ENCODE measurements at regions of chr10 and their contacts with region 1.

Region 1: DNA sequence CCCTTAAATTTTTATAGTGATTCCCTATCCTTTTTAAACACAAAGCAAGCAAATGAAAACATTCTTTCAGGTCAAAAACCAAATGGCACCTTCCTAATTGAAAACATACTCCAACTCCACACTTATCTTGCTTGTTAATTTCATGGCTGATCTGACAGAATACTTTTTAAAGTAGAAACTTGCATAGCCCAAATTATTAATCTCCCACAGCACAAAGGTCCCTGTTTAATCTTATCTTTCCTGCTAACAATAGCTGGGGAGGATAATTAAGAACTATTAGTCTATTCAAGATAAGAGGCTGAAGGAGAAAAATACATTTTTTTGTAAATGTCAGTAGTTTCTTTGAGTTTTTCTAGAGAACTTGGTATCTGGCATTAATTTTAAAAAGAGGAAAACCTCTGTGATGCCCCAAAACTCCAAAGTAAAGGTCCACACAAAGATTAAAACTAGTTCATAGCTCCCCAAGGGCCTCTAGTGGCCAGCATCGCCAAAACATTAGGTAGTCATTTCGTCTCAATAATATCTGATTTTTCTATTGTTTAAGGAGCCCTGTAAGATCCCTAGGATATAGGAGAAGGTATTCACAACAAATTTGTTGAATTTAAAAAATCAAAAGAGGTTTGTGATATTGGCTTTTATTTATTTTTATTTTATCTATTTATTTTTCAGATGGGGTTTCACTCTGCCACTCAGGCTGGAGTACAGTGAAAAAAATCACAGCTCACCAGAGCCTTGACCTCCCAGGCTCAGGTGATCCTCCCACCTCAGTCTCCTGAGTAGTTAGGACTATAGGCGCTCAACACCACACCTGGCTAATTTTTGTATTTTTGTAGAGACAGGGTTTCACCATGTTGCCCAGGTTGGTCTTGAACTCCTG is 14.7 kb downstream of the CDNF start:
- DNase-seq: peak; percentile 80
- H3K4me3 ChIP-seq: no peak overlapping the region
- H3K27ac ChIP-seq: no peak overlapping the region
- H3K4me1 ChIP-seq: peaks cover 28% of the 10 kb centered on the region
- CTCF ChIP-seq: peak; percentile 99

Region 2: GRCh38 chr10:14499601-14499904 is 323.6 kb before region 1 on chr10:
- CTCF ChIA-PET with region 1: no interaction called
- POLR2A ChIA-PET with region 1: interaction called, 6 read pairs
- intact Hi-C with region 1: loop called (anchors 1 kb)
- DNase-seq: no peak
- H3K4me3 ChIP-seq: no peak overlapping the region
- H3K27ac ChIP-seq: no peak overlapping the region
- H3K4me1 ChIP-seq: peaks cover 23% of the 10 kb centered on the region
- CTCF ChIP-seq: no peak

Region 3: GRCh38 chr10:14536241-14537213 is 286.6 kb before region 1 on chr10:
- CTCF ChIA-PET with region 1: interaction called, 3 read pairs
- POLR2A ChIA-PET with region 1: interaction called, 3 read pairs
- intact Hi-C with region 1: loop called (anchors 2 kb)
- DNase-seq: peak; percentile 59
- H3K4me3 ChIP-seq: no peak overlapping the region
- H3K27ac ChIP-seq: no peak overlapping the region
- H3K4me1 ChIP-seq: no peaks in the 10 kb centered on the region
- CTCF ChIP-seq: peak; percentile 94

Region 4: GRCh38 chr10:14617852-14618251 is 205.3 kb before region 1 on chr10:
- CTCF ChIA-PET with region 1: no interaction called
- POLR2A ChIA-PET with region 1: interaction called, 11 read pairs
- intact Hi-C with region 1: no loop called
- DNase-seq: no peak
- H3K4me3 ChIP-seq: no peak overlapping the region
- H3K27ac ChIP-seq: no peak overlapping the region
- H3K4me1 ChIP-seq: peaks cover 28% of the 10 kb centered on the region
- CTCF ChIP-seq: 0 out of 2 replicates have a peak, but pooled peaks have one; percentile 23

Region 5: DNA sequence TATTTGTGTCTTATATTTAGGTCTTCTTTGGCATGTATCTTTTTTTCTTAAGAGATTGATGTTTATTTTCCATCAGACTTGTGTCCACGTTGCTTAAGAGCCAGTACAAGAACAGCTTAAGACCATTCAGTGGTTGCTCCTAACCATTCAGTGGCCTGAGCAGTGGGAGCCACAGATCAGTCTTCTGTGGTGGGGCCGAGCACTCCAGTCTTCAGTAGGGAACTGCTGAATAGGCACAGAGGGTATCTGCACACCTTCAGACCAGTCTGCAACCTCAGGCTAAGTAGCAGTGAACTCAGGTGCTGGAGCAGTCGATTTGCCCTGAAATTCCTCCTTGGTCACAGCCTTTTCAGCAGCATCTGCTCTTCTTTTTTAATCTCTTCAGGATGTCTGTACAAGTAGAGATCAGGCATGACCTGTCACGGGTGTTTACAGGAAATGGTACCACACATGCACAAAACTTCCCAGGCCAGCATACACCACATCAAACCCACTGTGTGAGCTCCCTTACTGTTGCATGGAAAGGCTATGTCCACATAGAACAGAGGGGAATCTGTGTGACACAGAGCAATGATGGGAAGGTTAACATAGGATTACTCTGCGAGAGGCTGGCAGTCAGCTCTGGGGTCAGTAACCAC is 99.9 kb before region 1 on chr10:
- CTCF ChIA-PET with region 1: no interaction called
- POLR2A ChIA-PET with region 1: no interaction called
- intact Hi-C with region 1: no loop called
- DNase-seq: peak; percentile 59
- H3K4me3 ChIP-seq: no peak overlapping the region
- H3K27ac ChIP-seq: peak overlapping the region; percentile 19
- H3K4me1 ChIP-seq: peaks cover 18% of the 10 kb centered on the region
- CTCF ChIP-seq: no peak

Measured in OCI-LY7 (cell line).